Dorsolateral prefrontal cortex (tissue), 120 donors: ENCODE measurements at regions of chr2 and their contacts with region 1.

Region 1: DNA sequence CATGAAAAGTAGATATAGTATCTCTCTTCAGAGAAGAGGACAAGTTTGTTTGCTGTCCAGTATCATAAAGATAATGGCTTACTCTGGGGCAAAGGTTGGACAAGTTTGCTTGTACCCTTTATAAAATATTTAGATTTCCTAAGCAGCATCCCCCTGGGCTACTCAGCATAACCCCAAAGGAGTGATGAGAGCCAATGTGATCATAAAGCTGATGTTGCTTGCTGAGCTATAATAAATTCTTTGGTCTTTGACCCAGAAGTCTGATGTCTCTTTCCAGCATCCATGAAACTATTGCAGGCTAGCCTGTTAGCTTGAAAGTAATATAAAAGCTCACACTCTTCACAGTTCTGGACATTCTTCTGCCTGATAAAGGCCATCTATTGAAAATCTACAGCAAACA is 138.3 kb upstream of the STON1 start:
- DNase-seq: no peak
- H3K4me3 ChIP-seq: peak overlapping the region in 7 of 59 donors; percentile 0 to 27 (median 18)
- H3K27ac ChIP-seq: peak overlapping the region in 26 of 59 donors; percentile 2 to 69 (median 32)
- H3K27me3 ChIP-seq: no peaks in the 10 kb centered on the region
- CTCF ChIP-seq: no peak

Region 2: DNA sequence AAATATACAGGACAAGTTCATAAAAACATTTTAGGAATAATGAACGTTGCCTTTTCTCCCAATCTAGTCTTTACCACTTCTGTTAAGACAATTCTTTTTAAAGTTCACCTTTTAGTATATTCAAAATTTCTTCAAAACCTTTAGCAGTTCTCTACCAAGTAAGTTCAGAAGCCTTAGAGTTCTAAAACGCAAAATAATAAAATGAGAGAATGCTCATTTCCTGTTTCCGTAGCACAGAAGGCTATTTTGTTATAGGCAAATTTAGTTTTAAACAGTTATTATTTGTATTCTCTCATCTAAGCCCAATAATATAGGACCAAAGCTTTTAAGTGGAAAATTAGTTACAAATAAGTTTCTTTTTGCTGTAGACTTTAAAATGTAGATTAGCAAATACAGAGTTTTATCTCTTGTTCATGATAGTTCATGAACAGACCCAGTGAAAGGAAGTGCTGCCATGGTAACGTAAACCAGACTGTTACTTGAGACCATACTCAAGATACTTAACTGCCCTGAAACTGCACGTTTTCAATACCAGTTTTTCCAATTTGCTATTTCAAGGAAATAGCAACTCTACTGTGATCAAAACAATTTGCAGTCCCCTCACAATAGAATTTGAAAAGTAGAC is 34.8 kb before region 1 on chr2:
- intact Hi-C with region 1: loop called in 1 of 2 experiments (anchors 5 kb)
- DNase-seq: no peak
- H3K4me3 ChIP-seq: no peak overlapping the region
- H3K27ac ChIP-seq: peak overlapping the region in 22 of 59 donors; percentile 0 to 42 (median 19)
- H3K27me3 ChIP-seq: no peaks in the 10 kb centered on the region
- CTCF ChIP-seq: no peak